Posterior vena cava (tissue), 2 donors: ENCODE measurements at regions of chr5 and their contacts with region 1.

Region 1: DNA sequence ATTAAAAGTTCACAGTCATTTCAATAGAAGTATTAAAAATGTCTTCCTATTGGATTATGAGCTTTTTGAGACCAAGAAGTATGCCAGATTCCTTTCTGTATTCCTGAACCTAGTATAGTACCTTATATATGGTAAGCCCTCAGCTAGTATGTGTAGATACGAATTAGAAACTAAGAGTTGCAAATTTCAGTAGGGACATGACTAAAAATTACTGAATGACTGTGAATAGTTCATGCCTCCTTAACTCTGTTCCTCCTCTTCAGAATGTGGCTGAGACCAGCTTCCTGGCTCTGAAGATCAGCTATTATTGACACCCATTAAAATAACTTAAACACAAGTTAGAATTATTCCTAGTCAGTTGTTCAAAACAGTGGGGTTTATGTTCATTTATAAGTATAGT is 19.7 kb downstream of the KDM3B start:
- DNase-seq: no peak

Region 2: GRCh38 chr5:138138949-138139780 is 233.1 kb before region 1 on chr5 and contains the start of gene NME5:
- intact Hi-C with region 1: loop called in 1 of 2 experiments (anchors 5 kb)
- DNase-seq: peak; percentile 88
- total RNA-seq, gene NME5: 1.5 to 2.3 TPM